Activated B cell treated with CpG ODN at 0.5 μM for 24 hours (primary cell): ENCODE measurements at regions of chr10 and their contacts with region 1.

Region 1: GRCh38 chr10:86399879-86400704 is 33.5 kb upstream of the GRID1 start:
- DNase-seq: peak; percentile 87
- ATAC-seq: peak; percentile 87
- H3K4me3 Mint-ChIP-seq: peak overlapping the region; percentile 87
- H3K27ac Mint-ChIP-seq: peak overlapping the region; percentile 69
- H3K4me1 Mint-ChIP-seq: peaks cover 13% of the 10 kb centered on the region
- H3K27me3 Mint-ChIP-seq: peaks cover 5% of the 10 kb centered on the region
- CTCF ChIP-seq: no peak

Region 2: DNA sequence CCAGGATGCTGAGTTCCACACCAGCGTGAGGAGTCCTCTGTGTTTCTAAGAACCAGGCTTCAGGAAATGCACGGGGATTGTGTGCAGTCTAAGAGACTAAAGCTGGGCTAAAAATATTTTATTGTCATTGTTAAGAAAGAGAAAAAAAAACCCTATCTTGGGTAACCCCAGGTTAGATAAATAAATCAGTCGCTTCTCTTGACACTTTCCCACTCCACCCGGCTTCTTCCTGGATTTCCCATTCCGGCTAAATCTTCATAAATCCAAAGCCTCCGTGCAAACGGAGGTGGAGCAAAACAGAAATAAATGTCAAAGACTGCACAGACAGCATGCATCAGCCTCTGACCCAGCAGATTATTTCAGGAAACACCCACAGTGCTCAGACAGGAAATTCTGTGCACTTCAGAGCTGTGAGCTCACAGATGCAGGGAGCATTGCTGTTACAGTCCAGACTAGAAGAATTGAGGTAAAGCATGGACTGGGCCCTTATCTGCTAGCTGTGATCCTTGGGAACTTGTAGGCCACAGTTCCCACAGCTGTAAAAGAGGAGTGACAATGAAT is 11.3 kb after region 1 on chr10:
- CTCF ChIA-PET with region 1: interaction called, 34 read pairs
- POLR2A ChIA-PET with region 1: interaction called, 60 read pairs
- intact Hi-C with region 1: loop called (anchors 1 kb)
- DNase-seq: no peak
- ATAC-seq: no peak
- H3K4me3 Mint-ChIP-seq: peak overlapping the region; percentile 62
- H3K27ac Mint-ChIP-seq: peak overlapping the region; percentile 83
- H3K4me1 Mint-ChIP-seq: peaks cover 50% of the 10 kb centered on the region
- H3K27me3 Mint-ChIP-seq: no peaks in the 10 kb centered on the region
- CTCF ChIP-seq: no peak

Region 3: DNA sequence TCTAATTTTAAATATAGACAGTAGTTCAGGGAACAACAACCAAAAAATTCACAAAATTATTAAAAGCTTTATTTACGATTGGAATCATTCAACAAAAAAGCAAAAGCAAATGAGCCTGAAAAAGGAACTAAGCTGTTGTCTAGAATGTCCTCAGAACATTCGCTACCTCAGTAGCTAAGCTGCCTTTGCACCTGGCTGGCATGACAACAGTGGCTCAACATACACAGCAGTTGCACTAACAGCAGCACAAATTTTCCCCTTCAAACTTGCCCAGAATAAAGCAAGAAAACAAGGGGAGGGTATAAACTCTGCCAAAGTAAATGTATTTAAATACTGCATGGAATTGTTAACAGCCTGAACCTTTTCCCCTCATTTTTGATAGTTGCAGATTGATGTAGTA is 36.9 kb after region 1 on chr10:
- CTCF ChIA-PET with region 1: no interaction called
- POLR2A ChIA-PET with region 1: interaction called, 3 read pairs
- intact Hi-C with region 1: loop called (anchors 2 kb)
- DNase-seq: no peak
- ATAC-seq: no peak
- H3K4me3 Mint-ChIP-seq: no peak overlapping the region
- H3K27ac Mint-ChIP-seq: no peak overlapping the region
- H3K4me1 Mint-ChIP-seq: no peaks in the 10 kb centered on the region
- H3K27me3 Mint-ChIP-seq: no peaks in the 10 kb centered on the region
- CTCF ChIP-seq: no peak

Region 4: GRCh38 chr10:86521678-86522509 is 121.8 kb after region 1 on chr10 and contains the start of gene WAPL:
- CTCF ChIA-PET with region 1: interaction called, 4 read pairs
- POLR2A ChIA-PET with region 1: interaction called, 17 read pairs
- intact Hi-C with region 1: loop called (anchors 1 kb)
- DNase-seq: peak; percentile 94
- ATAC-seq: peak; percentile 91
- H3K4me3 Mint-ChIP-seq: peak within 1 kb of the TSS; percentile 92
- H3K27ac Mint-ChIP-seq: peak within 1 kb of the TSS; percentile 80
- H3K4me1 Mint-ChIP-seq: peaks cover 41% of the 10 kb centered on the region
- H3K27me3 Mint-ChIP-seq: peaks cover 5% of the 10 kb centered on the region
- CTCF ChIP-seq: no peak
- total RNA-seq, gene WAPL: 35.9 and 38.5 TPM in 2 replicates

Region 5: DNA sequence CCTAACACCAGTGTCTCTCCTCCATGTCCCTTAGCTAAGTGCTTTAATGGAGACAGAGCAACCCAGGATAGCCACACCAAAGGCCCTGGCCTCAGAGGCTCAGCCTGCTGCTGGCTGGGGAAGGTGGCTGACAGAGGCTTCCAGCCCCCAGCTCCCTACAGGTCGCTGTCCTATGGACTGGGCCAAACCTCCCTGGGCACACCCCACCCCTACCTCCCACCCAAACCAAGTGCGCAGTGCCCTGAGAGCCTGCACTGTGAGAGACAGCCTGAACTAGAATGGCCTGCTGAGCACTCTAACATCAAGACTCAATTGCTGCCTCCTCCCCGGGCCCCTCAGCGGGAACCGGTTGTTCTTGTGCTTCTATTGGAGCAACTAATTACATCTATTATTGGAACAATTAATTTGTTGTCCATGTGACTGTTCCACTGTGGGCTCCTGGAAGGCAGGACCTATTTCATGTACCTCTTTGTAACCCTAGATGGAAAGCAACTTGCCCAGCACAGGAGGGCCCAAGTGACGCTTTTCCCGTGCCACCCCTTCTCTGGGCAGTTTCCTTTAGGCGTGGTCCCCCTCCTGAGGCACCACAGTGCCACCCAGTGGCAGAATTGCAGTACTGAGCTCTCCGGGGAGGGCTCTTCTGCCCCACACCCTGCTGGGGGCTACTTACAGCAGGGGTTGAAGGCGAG is 185.1 kb after region 1 on chr10:
- CTCF ChIA-PET with region 1: interaction called, 96 read pairs
- POLR2A ChIA-PET with region 1: interaction called, 13 read pairs
- intact Hi-C with region 1: loop called (anchors 1 kb)
- DNase-seq: peak; percentile 67
- ATAC-seq: peak; percentile 97
- H3K4me3 Mint-ChIP-seq: no peak overlapping the region
- H3K27ac Mint-ChIP-seq: no peak overlapping the region
- H3K4me1 Mint-ChIP-seq: no peaks in the 10 kb centered on the region
- H3K27me3 Mint-ChIP-seq: peaks cover 10% of the 10 kb centered on the region
- CTCF ChIP-seq: peak; percentile 62

Region 6: DNA sequence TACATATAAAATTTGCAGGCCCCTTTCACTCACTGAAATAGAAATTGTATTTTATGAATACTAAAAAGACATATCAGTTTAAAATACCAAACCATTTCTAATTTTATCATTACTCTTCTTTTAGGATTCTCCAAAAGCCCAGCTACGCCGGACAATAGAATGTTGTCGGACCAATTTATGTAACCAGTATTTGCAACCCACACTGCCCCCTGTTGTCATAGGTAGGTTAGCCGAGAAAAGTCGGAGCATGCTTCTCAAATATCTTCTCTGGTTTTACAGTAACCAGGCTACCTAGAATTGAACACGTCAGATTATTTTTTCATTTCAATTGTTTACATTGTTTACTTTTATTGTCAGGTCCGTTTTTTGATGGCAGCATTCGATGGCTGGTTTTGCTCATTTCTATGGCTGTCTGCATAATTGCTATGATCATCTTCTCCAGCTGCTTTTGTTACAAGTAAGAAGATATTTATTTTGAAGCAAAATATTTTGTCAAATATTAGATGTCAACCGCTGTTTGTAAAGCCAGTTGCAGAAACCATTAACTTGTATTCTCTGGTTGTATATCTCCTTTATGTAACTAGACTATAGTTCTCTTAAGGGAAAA is 499.7 kb after region 1 on chr10:
- CTCF ChIA-PET with region 1: interaction called, 3 read pairs
- POLR2A ChIA-PET with region 1: interaction called, 4 read pairs
- intact Hi-C with region 1: loop called (anchors 2 kb)
- DNase-seq: no peak
- ATAC-seq: peak; percentile 45
- H3K4me3 Mint-ChIP-seq: no peak overlapping the region
- H3K27ac Mint-ChIP-seq: no peak overlapping the region
- H3K4me1 Mint-ChIP-seq: no peaks in the 10 kb centered on the region
- H3K27me3 Mint-ChIP-seq: no peaks in the 10 kb centered on the region
- CTCF ChIP-seq: peak; percentile 45